ENCODE measurements at regions of chr19 and their contacts with region 1.

Region 1: DNA sequence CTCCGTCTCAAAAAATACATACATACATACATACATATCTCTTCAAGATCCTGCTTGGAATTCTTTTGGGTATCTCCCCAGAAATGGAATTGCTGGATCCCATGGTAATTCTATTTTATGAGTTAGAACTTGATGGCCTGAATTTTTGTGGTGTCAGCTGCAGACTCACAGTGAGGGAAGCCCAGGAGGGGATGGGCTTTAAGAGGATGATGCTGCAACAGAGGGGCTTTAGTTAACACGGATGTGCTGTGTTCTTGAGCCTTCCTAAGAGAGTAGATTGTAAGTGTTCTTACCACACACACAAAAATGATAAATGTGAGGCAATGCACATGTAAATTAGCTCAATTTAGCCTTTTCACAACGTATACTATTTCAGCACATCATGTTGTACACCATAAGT is 31.8 kb downstream of the CACNG6 start:
- DNase-seq: no peak
- H3K4me3 ChIP-seq: no peak overlapping the region
- H3K27ac ChIP-seq: no peak overlapping the region
- H3K4me1 ChIP-seq: peaks cover 0 to 8% of the 10 kb centered on the region in 2 experiments; a peak in 1 of 4 replicates
- H3K27me3 ChIP-seq: no peaks in the 10 kb centered on the region
- CTCF ChIP-seq: no peak
- EP300 ChIP-seq: no peak
- RAD21 ChIP-seq: no peak

Region 2: DNA sequence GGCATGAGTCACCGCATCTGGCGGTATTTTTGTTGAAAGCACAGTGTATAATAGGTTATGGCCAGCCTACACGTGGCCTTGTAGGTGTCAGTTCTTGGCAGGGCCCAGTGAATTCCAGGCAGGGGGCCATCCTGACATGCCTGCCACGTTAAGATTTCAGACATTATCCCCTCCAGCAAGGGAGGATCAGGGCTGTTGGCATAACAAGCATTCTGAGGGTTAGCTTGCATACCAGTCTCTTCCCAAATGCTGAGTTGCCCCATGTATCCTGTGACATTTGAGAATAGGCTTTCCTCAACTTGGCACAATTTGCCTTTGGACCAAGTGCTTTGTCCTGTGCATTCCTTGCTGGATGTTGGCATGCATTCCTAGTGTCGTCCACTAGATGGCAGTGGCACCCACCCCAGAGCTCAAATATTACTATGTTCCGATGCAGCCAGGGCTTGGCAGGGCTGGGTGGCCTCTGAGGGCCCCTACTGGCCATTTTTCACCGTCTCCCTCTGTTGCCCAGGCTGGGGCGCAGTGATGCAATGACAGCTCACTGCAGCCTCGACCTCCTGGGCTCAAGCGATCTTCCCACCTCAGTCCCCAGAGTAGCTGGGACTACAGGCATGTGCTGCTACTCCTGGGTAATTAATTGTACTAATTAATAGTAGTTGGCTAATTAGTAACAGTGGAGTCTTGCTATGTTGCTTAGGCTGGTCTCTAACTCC is 230.3 kb before region 1 on chr19:
- CTCF ChIA-PET with region 1: interaction called, 44 read pairs
- POLR2A ChIA-PET with region 1: no interaction called
- DNase-seq: peak; percentile 90
- H3K4me3 ChIP-seq: no peak overlapping the region; a peak in 1 of 4 replicates
- H3K27ac ChIP-seq: no peak overlapping the region
- H3K4me1 ChIP-seq: no peaks in the 10 kb centered on the region
- H3K27me3 ChIP-seq: peaks cover 38% of the 10 kb centered on the region
- CTCF ChIP-seq: peak; percentile 99
- EP300 ChIP-seq: no peak
- RAD21 ChIP-seq: peak; percentile 77

Region 3: DNA sequence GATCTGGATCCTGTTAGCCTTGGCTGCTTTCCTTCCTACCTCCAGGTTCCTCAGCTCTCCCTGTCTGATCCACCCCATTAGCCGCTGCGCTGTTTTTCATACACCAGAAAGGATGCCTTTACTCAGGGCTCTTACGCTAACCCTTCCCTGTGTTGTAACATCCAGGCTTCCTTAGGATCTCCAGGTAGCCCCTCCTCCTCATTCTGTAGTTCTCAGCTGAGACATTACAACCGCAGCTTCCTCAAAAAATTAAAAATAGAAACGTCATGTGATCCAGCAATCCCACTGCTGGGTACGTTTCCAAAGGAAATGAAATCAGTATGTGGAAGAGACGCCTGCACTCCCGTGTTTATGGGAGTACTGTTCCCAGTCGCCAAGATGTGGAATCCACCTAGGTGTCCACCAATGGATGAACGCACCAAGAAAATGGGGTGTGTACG is 173.9 kb before region 1 on chr19:
- CTCF ChIA-PET with region 1: interaction called, 128 read pairs
- POLR2A ChIA-PET with region 1: interaction called, 5 read pairs
- DNase-seq: no peak
- H3K4me3 ChIP-seq: 0 out of 4 replicates have a peak overlapping the region, but pooled peaks of 1 of the 2 experiments have one; percentile 6
- H3K27ac ChIP-seq: peak overlapping the region; percentile 20 to 85; a peak in 3 of 4 replicates
- H3K4me1 ChIP-seq: no peaks in the 10 kb centered on the region
- H3K27me3 ChIP-seq: no peaks in the 10 kb centered on the region
- CTCF ChIP-seq: no peak
- EP300 ChIP-seq: no peak
- RAD21 ChIP-seq: no peak

Region 4: GRCh38 chr19:53947624-53948023 is 75.6 kb before region 1 on chr19:
- CTCF ChIA-PET with region 1: interaction called, 10 read pairs
- POLR2A ChIA-PET with region 1: no interaction called
- DNase-seq: peak; percentile 65
- H3K4me3 ChIP-seq: no peak overlapping the region
- H3K27ac ChIP-seq: no peak overlapping the region
- H3K4me1 ChIP-seq: no peaks in the 10 kb centered on the region; a peak in 2 of 4 replicates
- H3K27me3 ChIP-seq: no peaks in the 10 kb centered on the region
- CTCF ChIP-seq: peak; percentile 32; the same call in 1 of the 2 replicates
- EP300 ChIP-seq: no peak
- RAD21 ChIP-seq: peak; percentile 59

Region 5: GRCh38 chr19:54047616-54048015 is 24.4 kb after region 1 on chr19:
- CTCF ChIA-PET with region 1: interaction called, 10 read pairs
- POLR2A ChIA-PET with region 1: no interaction called
- DNase-seq: no peak
- H3K4me3 ChIP-seq: no peak overlapping the region
- H3K27ac ChIP-seq: no peak overlapping the region
- H3K4me1 ChIP-seq: no peaks in the 10 kb centered on the region
- H3K27me3 ChIP-seq: peaks cover 56% of the 10 kb centered on the region; the same call in 1 of the 2 replicates
- CTCF ChIP-seq: no peak
- EP300 ChIP-seq: no peak
- RAD21 ChIP-seq: no peak

Region 6: DNA sequence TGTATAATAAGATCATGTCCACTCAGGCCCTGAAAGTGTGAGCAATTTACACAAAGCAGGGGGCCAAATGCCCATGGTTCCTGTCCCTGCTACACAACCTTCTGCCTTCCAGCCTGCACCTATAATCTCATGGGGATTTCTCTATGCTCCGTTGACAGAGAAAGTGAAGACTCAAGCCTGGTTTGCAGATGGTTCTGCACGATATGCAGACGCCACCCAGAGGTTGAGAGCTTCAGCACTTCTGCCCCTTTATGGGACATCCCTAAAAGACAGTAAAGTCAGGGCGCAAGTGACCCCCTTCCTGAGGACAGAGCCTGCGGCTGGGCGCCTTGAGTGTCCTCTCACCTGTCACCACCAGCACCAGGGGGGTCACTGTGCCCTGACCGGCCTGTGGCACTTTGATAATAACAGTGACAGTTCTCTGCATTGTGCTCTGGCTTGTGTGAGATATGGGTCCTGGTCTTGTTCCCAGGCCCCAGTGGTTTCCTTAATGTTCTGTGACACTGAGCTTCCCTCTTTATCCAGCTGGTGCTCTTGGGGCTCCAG is 274.6 kb after region 1 on chr19:
- CTCF ChIA-PET with region 1: no interaction called
- POLR2A ChIA-PET with region 1: no interaction called
- DNase-seq: no peak
- H3K4me3 ChIP-seq: no peak overlapping the region
- H3K27ac ChIP-seq: no peak overlapping the region
- H3K4me1 ChIP-seq: no peaks in the 10 kb centered on the region
- H3K27me3 ChIP-seq: peaks cover 47% of the 10 kb centered on the region
- CTCF ChIP-seq: no peak; the same call in 1 of the 2 replicates
- EP300 ChIP-seq: no peak
- RAD21 ChIP-seq: no peak; the same call in 1 of the 2 replicates